SK-N-SH (cell line): ENCODE measurements at regions of chr20 and their contacts with region 1.

Region 1: GRCh38 chr20:2756056-2756611 is 44.3 kb downstream of the CPXM1 start:
- DNase-seq: peak; percentile 85
- H3K4me3 ChIP-seq: 0 out of 4 replicates have a peak overlapping the region, but pooled peaks of 1 of the 2 experiments have one; percentile 11
- H3K27ac ChIP-seq: no peak overlapping the region
- H3K4me1 ChIP-seq: no peaks in the 10 kb centered on the region
- H3K27me3 ChIP-seq: no peaks in the 10 kb centered on the region
- CTCF ChIP-seq: peak; percentile 75
- EP300 ChIP-seq: no peak
- RAD21 ChIP-seq: peak; percentile 79

Region 2: DNA sequence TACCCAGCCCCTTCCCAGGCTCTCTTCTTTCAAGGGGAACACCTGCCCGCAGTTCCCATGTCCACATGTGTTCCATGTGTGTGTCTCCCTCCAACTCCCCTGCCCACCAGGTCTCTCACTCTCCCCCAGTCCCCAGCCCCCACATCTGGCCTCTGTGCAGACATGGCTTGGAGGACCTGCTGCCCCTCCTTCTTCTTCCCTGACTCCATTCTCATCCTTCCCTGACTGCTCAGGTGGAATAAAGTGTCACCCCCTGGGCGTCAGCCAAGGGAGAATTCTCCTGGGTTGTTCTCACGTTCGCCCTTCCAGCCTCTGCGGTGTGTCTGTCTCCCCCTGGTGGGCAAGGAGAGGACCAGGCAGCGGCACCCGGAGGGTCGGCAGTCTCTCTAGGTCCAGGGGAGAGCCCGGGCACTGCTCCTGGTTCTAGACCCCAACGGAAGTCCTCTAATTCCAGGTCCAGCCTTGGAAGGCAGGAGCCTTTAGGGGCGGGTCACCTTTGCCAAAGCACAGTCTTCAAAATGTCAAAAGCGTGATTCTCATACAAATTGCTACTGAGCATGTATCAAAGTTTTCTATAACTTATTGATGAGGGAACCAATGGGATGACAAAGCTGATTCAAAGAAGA is 13.1 kb before region 1 on chr20:
- CTCF ChIA-PET with region 1: interaction called, 12 read pairs
- POLR2A ChIA-PET with region 1: no interaction called
- DNase-seq: peak; percentile 82
- H3K4me3 ChIP-seq: no peak overlapping the region
- H3K27ac ChIP-seq: no peak overlapping the region
- H3K4me1 ChIP-seq: no peaks in the 10 kb centered on the region
- H3K27me3 ChIP-seq: no peaks in the 10 kb centered on the region
- CTCF ChIP-seq: peak; percentile 73
- EP300 ChIP-seq: no peak
- RAD21 ChIP-seq: peak; percentile 59

Region 3: DNA sequence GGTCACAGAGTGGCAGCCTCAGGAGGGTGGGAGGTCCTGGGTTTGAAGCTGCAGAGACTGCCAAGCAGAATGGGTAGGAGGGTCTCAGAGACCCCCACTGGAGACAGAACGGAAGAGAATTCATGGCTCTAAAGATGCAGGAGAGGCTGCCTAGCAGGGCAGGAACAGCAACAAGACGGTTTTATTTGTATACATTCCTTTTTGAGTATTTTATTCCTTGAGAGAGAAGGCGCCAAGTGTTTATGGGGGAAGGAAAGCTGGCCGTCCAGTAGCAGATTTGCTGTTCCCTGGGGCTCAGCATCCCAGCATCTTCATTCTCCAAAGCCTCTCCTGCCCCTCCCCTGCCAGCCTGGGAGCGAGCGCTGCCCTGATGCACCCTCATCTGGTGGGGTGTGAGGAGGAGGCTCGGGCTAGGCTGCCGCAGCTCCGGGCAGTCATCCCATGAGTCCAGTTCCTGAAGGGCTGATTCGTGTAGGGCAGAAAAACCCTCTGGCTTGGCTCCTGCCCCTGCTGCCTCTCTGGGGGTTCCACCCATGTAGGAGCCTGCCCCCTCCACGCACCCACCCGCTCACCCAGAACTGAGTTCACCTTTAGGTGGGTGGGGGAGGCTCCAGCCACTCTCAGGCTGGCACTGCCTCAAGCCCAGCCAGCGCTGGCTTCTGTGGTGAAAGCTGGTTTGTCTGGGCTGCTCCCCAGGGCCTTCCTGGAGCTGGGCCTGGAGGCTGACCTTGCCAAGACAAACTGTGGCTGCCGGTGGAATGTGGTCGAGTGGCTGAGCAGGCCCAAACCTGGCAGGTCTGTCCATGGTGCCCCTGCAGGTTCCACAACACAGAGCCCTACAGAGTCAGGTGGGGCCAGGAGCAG is 11.9 kb after region 1 on chr20:
- CTCF ChIA-PET with region 1: interaction called, 16 read pairs
- POLR2A ChIA-PET with region 1: no interaction called
- DNase-seq: peak; percentile 14
- H3K4me3 ChIP-seq: no peak overlapping the region
- H3K27ac ChIP-seq: no peak overlapping the region
- H3K4me1 ChIP-seq: 0 out of 4 replicates have a peak, but pooled peaks cover 0 to 5% of the 10 kb centered on the region in 2 experiments
- H3K27me3 ChIP-seq: no peaks in the 10 kb centered on the region
- CTCF ChIP-seq: no peak
- EP300 ChIP-seq: no peak
- RAD21 ChIP-seq: no peak

Region 4: GRCh38 chr20:2849529-2849928 is 93.4 kb after region 1 on chr20:
- CTCF ChIA-PET with region 1: interaction called, 15 read pairs
- POLR2A ChIA-PET with region 1: no interaction called
- DNase-seq: no peak
- H3K4me3 ChIP-seq: no peak overlapping the region
- H3K27ac ChIP-seq: no peak overlapping the region
- H3K4me1 ChIP-seq: peaks cover 0 to 2% of the 10 kb centered on the region in 2 experiments; a peak in 1 of 4 replicates
- H3K27me3 ChIP-seq: no peaks in the 10 kb centered on the region
- CTCF ChIP-seq: no peak
- EP300 ChIP-seq: no peak
- RAD21 ChIP-seq: no peak

Region 5: DNA sequence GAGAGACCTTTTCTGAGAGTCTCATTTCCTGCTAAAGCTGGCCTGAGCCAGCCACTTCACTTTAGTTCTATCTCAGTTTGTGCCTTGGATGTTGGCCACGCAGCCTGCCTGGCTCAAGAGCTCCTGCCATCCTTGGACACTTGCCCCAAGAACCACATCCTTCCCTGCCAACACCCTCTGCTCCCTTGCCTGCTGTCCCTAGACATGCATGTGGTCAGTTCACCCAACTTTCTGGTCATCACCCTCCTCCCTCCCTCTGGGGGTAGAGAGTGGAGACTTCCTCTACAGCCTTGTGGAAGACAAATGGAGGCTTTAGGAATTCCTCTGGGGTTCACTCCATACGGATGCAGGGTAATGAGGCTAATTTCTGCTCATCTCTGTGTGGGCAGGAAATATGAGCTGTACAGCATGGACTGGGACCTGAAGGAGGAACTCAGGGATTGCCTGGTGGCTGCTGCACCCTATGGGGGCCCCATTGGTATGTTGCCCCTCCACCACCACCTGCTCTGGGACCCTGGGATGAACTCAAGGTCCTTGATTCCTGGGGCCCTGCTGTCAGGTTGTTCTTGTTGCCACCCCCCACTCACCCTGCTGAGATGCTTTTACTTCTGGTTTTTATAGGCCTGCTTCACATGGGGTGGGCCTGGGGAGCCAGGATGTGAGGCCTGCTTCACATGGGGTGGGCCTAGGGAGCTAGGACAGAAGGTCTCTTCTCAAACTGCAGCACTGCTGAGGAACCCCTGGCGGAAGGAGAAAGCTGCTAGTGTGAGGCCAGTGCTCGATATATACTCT is 103.4 kb after region 1 on chr20:
- CTCF ChIA-PET with region 1: interaction called, 10 read pairs
- POLR2A ChIA-PET with region 1: no interaction called
- DNase-seq: no peak
- H3K4me3 ChIP-seq: no peak overlapping the region
- H3K27ac ChIP-seq: no peak overlapping the region
- H3K4me1 ChIP-seq: no peaks in the 10 kb centered on the region
- H3K27me3 ChIP-seq: no peaks in the 10 kb centered on the region
- CTCF ChIP-seq: no peak
- EP300 ChIP-seq: no peak
- RAD21 ChIP-seq: no peak